ENCODE measurements at regions of chr2 and their contacts with region 1.

Region 1: DNA sequence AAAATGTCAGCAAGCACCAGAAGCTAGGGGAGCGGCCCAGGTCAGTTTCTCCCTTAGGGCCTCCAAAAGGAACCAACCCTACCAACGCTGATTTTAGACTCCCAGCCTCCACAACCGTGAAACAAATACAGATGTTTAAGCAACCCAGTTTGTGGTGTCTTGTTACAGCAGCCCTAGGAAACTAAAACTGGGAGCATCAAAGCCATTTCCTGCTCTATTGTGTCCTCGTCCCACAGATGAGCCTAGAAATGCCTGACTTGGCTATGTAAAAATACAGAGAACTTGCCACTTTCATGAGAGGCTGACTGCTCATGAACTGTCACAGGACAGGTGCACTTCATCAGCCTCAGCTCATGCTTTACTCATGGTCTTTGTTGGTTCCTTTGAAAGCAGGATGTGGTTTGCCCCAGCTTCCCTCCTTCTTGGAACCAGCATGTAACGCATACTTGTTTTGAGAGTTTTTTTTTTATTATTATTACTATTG is 97.6 kb upstream of the SLC39A10 start:
- DNase-seq: peak; percentile 95
- H3K4me3 Mint-ChIP-seq: peak overlapping the region; percentile 59
- H3K27ac Mint-ChIP-seq: peak overlapping the region; percentile 98
- H3K4me1 Mint-ChIP-seq: peaks cover 71% of the 10 kb centered on the region
- H3K27me3 Mint-ChIP-seq: no peaks in the 10 kb centered on the region

Region 2: GRCh38 chr2:195289081-195289480 is 270.4 kb before region 1 on chr2:
- CTCF ChIA-PET with region 1: no interaction called
- intact Hi-C with region 1: no loop called
- DNase-seq: no peak
- H3K4me3 Mint-ChIP-seq: no peak overlapping the region
- H3K27ac Mint-ChIP-seq: no peak overlapping the region
- H3K4me1 Mint-ChIP-seq: no peaks in the 10 kb centered on the region
- H3K27me3 Mint-ChIP-seq: no peaks in the 10 kb centered on the region

Region 3: GRCh38 chr2:195318440-195319111 is 240.9 kb before region 1 on chr2:
- CTCF ChIA-PET with region 1: no interaction called
- intact Hi-C with region 1: loop called (anchors 5 kb)
- DNase-seq: peak; percentile 69
- H3K4me3 Mint-ChIP-seq: no peak overlapping the region
- H3K27ac Mint-ChIP-seq: no peak overlapping the region
- H3K4me1 Mint-ChIP-seq: peaks cover 10% of the 10 kb centered on the region
- H3K27me3 Mint-ChIP-seq: no peaks in the 10 kb centered on the region

Region 4: DNA sequence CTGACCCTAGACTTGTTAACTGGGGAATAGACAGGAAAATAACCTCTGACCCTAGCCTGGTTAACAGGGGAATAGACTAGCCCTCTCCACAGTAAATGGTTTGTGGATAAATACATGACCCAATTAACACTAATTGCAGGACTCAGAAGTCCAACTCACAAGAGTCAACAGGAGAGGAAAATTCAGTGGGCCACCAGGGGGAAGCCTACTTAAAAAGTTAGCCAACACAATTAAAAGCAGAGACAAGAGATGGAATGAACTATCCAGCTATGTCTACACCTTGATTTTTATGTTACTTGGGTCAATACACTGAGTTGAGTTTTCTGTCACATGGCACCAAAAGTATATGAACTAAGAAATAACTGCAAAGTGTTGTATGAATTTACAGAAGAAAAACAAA is 61.3 kb before region 1 on chr2:
- CTCF ChIA-PET with region 1: interaction called, 4 read pairs
- intact Hi-C with region 1: loop called (anchors 1 kb)
- DNase-seq: peak; percentile 76
- H3K4me3 Mint-ChIP-seq: no peak overlapping the region
- H3K27ac Mint-ChIP-seq: no peak overlapping the region
- H3K4me1 Mint-ChIP-seq: peaks cover 44% of the 10 kb centered on the region
- H3K27me3 Mint-ChIP-seq: no peaks in the 10 kb centered on the region

Region 5: GRCh38 chr2:195575879-195576401 is 16.5 kb after region 1 on chr2:
- CTCF ChIA-PET with region 1: interaction called, 5 read pairs
- intact Hi-C with region 1: loop called (anchors 1 kb)
- DNase-seq: peak; percentile 32
- H3K4me3 Mint-ChIP-seq: peak overlapping the region; percentile 37
- H3K27ac Mint-ChIP-seq: peak overlapping the region; percentile 78
- H3K4me1 Mint-ChIP-seq: peaks cover 77% of the 10 kb centered on the region
- H3K27me3 Mint-ChIP-seq: no peaks in the 10 kb centered on the region

Region 6: DNA sequence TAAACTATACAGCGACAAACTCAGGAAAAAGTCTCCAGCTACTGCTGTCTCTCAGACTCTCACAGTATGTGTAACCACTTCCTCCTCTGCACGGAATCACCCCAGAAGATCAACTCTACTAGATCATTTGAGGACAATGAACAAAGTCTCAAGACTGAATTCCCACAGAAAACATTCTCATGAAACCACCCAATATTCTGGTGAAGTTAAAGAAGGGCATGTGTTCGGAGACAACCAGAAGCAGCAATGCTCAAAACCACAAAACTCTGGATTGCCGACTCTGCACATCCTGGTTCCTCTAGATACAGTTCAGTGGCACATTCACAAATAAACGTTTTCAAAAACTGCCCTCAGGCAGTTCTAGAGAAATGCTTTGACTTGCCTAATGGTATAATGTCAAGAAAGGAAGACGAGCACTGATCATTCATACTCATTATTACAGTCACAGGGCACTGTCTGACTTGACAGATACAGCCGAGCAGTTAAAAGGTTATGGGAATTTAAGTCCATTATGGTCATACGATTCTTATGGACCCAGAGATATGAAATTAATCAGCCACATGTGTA is 703.8 kb after region 1 on chr2:
- CTCF ChIA-PET with region 1: no interaction called
- intact Hi-C with region 1: loop called (anchors 1 kb)
- DNase-seq: peak; percentile 61
- H3K4me3 Mint-ChIP-seq: peak overlapping the region; percentile 70
- H3K27ac Mint-ChIP-seq: peak overlapping the region; percentile 97
- H3K4me1 Mint-ChIP-seq: peaks cover 80% of the 10 kb centered on the region
- H3K27me3 Mint-ChIP-seq: no peaks in the 10 kb centered on the region

Region 7: GRCh38 chr2:196399722-196400691 is 840.5 kb after region 1 on chr2:
- CTCF ChIA-PET with region 1: no interaction called
- intact Hi-C with region 1: no loop called
- DNase-seq: no peak
- H3K4me3 Mint-ChIP-seq: no peak overlapping the region
- H3K27ac Mint-ChIP-seq: no peak overlapping the region
- H3K4me1 Mint-ChIP-seq: no peaks in the 10 kb centered on the region
- H3K27me3 Mint-ChIP-seq: no peaks in the 10 kb centered on the region

Region 8: GRCh38 chr2:197209742-197210408 is 1650.4 kb after region 1 on chr2:
- CTCF ChIA-PET with region 1: no interaction called
- intact Hi-C with region 1: loop called (anchors 5 kb)
- DNase-seq: peak; percentile 78
- H3K4me3 Mint-ChIP-seq: peak overlapping the region; percentile 46
- H3K27ac Mint-ChIP-seq: peak overlapping the region; percentile 97
- H3K4me1 Mint-ChIP-seq: peaks cover 99% of the 10 kb centered on the region
- H3K27me3 Mint-ChIP-seq: no peaks in the 10 kb centered on the region

Measured in activated naive CD4-positive, alpha-beta T cell treated with anti-CD3 and anti-CD28 coated beads for 36 hours (primary cell).